BJ (cell line): ENCODE measurements at regions of chr1 and their contacts with region 1.

Region 1: GRCh38 chr1:32063261-32063681 is 9.5 kb upstream of the TMEM39B start:
- DNase-seq: no peak
- H3K4me3 ChIP-seq: no peak overlapping the region
- H3K27me3 ChIP-seq: no peaks in the 10 kb centered on the region
- CTCF ChIP-seq: peak; percentile 59

Region 2: DNA sequence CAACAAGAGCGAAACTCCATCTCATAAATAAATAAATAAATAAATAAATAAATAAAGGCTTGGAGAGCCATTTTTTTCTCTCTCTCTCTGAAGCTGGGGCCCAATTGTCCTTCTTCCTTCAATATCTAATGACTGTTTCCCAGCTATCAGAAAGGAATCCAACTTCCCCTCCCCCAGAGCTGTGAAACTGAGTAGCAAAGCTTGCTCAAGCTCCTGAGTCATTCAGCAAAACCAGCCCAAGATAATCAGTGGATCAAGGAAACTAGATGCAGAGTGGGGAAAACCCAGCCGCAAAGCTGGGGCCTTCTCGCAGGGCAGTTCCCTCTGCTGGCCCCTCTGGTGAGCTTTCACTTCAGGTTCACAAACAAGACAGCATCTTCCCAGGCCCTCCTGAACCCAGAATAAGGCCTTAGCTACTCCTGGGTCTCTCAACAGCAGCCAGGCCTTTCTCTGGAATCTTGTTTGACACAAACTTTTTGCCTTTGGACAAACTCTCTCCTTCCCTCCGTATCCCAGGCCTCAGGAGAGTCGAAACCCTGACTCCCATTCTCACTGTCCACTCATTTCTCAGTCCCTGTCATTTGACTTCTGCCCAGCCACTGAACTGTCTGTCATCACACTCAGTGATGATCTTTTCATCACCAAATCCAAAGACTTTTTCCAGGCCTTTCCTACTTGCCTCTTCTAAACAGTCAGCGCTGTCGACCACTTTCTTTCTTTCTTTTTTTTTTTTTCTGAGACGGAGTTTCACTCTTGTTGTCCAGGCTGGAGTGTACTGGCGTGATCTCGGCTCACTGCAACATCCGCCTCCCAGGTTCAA is 107.1 kb before region 1 on chr1:
- CTCF ChIA-PET with region 1: no interaction called
- POLR2A ChIA-PET with region 1: no interaction called
- DNase-seq: peak; percentile 97
- H3K4me3 ChIP-seq: no peak overlapping the region
- H3K27me3 ChIP-seq: no peaks in the 10 kb centered on the region
- CTCF ChIP-seq: peak; percentile 62

Region 3: DNA sequence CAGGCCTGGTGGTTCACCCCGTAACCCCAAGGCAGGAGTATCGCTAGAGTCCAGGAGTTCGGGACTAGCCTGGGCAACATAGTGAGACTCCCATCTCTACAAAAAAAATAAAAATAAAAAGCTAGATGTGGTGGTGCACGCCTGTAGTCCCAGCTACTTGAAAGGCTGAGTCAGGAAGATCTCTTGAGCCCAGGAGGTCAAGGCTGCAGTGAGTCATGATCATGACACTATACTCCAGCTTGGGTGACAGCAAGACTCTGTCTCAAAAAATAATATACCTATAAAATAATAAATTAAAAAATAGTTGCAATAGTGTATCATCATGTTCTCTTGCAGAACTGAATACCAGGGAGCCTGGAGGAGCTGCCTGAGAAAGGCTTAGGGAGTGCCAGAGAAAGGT is 10.4 kb before region 1 on chr1:
- CTCF ChIA-PET with region 1: interaction called, 14 read pairs
- POLR2A ChIA-PET with region 1: interaction called, 5 read pairs
- DNase-seq: no peak
- H3K4me3 ChIP-seq: no peak overlapping the region
- H3K27me3 ChIP-seq: no peaks in the 10 kb centered on the region
- CTCF ChIP-seq: no peak

Region 4: DNA sequence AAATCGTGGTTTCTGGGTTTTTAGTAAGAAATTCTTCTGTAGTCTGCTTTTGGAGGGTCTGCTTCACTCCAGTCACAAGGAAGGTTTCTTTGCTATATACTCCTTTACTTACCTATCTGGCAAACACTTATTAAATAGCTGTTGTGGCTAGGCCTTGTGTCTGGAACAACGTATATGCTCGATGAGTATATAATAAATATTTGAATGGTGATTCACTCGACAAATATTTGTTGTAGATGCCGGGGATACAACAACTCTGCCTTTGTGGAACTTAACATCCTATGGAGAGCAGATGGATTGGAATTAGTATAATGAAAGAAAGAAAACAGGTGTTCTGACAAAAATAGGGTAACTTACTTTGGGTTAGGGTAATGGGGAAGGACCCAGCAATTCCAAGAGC is 75.7 kb after region 1 on chr1:
- CTCF ChIA-PET with region 1: no interaction called
- POLR2A ChIA-PET with region 1: no interaction called
- DNase-seq: no peak
- H3K4me3 ChIP-seq: no peak overlapping the region
- H3K27me3 ChIP-seq: no peaks in the 10 kb centered on the region
- CTCF ChIP-seq: no peak